Left cardiac atrium (tissue), 4 donors: ENCODE measurements at regions of chr2 and their contacts with region 1.

Region 1: GRCh38 chr2:7044261-7045250 is 127.3 kb downstream of the RNF144A start:
- DNase-seq: peak; percentile 75
- ATAC-seq: peak; percentile 82 to 83

Region 2: DNA sequence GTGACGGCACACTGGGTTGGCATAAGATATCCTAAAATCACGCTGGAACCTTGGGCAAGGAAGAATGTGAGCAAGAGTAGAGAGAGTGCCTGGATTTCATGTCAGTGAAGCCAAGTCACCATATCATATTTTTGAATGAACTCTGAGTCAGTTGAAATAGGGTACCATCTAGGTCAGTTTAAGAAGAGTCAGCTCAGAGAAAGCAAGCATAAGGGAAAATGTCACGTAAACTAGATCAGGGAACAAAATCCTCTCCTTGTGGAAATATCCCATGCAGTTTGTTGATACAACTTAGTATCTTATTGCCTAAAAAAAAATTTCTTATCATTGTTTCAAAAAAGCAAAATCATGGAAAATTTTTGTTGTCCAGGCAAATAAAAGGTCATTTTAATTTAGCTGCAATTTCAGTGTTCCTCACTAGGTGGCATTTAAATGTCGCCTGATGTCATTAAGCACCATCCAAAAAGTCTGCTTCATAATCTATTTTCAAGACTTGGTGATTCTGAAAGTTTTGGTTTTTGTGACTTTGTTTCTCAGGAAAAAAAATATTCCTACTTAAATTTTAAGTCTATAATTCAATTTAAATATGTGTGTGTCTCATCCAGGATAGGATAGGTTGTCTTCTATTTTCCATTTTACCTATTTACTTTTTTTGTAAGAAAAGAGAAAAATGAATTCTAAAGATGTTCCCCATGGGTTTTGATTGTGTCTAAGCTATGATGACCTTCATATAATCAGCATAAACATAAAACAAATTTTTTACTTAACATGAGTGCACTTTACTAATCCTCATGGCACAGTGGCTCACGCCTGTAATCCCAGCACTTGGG is 147.4 kb before region 1 on chr2:
- intact Hi-C with region 1: loop called (anchors 2 to 5 kb)
- DNase-seq: no peak
- ATAC-seq: peak; percentile 35 to 50